ENCODE measurements at regions of chr10 and their contacts with region 1.

Region 1: DNA sequence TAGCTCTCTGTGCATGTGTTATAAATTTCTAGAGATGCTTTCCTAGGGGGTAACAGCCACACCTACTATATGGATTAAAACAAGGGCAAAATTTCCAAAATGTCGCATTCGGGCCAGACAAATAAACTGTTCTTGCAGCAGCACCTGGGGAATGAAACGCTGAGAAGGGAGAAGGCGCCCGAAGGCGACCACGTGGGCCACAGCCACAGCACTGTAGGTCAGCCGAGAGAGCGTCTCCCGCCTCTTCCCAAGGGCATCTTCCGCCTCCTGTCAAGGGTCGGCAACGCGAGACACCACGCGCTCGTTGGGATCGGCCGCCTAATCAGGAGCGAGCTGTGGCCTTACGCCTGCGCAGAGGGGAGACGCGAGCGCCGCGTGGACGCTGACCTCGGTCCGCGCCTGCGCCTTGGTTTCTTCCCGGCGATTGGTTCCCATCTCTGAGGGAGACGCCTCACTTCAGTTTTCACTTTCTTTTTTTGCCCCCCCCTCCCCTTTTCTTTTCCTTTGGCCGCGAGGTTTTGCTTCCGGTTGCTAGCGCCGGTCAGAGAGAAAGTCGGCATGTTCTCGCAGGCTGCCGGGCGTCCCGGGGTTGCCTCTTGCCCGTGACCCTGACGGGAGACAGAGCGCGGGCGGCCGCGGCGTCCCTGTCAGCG is at the start of gene TASOR2:
- DNase-seq: peak; percentile 96
- H3K4me3 Mint-ChIP-seq: peak within 1 kb of the TSS; percentile 97
- H3K27ac Mint-ChIP-seq: peak within 1 kb of the TSS; percentile 97
- H3K4me1 Mint-ChIP-seq: peaks cover 62% of the 10 kb centered on the region
- H3K27me3 Mint-ChIP-seq: no peaks in the 10 kb centered on the region
- total RNA-seq, gene TASOR2: 89.2 and 90.9 TPM in 2 replicates

Region 2: DNA sequence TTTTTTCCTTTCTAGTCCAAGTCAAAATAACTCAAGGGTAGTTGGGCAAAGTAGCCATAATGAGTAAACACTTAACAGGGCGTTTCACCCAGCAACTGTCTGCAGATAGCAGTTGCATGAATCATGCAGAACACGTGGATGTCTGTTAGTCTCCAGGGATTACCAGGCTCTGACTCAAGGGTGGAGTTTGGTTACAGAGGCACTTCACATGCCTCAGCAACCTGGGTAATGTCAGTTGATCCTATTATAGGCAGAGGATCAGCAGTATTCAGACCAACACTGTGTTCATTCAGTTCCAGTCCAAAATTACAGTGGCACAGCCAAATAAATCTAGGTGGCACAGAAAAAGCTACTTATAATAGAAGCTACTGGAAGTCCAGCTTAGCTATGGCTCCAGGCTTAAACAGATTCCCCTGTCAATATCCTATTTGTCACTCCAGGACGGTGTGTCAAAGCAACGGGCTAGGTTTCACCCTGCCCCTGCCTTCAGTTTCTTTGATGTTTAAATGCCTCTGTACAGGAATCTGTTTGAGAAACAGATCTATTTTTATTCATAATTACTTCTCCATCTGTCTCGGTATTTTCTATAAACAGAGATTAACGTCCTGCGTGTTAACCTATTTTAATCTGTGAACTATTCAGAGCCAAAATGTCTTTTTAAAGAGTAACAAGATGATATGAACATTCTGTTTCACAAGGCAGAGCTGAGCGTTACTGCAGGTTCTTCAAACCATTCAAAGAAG is 1021.1 kb before region 1 on chr10:
- intact Hi-C with region 1: no loop called
- DNase-seq: no peak
- H3K4me3 Mint-ChIP-seq: no peak overlapping the region
- H3K27ac Mint-ChIP-seq: no peak overlapping the region
- H3K4me1 Mint-ChIP-seq: no peaks in the 10 kb centered on the region
- H3K27me3 Mint-ChIP-seq: peaks cover 27% of the 10 kb centered on the region

Region 3: GRCh38 chr10:5293691-5294550 is 390.5 kb before region 1 on chr10:
- intact Hi-C with region 1: loop called (anchors 10 kb)
- DNase-seq: peak; percentile 73
- H3K4me3 Mint-ChIP-seq: peak overlapping the region; percentile 93
- H3K27ac Mint-ChIP-seq: peak overlapping the region; percentile 100
- H3K4me1 Mint-ChIP-seq: peaks cover 82% of the 10 kb centered on the region
- H3K27me3 Mint-ChIP-seq: no peaks in the 10 kb centered on the region

Region 4: DNA sequence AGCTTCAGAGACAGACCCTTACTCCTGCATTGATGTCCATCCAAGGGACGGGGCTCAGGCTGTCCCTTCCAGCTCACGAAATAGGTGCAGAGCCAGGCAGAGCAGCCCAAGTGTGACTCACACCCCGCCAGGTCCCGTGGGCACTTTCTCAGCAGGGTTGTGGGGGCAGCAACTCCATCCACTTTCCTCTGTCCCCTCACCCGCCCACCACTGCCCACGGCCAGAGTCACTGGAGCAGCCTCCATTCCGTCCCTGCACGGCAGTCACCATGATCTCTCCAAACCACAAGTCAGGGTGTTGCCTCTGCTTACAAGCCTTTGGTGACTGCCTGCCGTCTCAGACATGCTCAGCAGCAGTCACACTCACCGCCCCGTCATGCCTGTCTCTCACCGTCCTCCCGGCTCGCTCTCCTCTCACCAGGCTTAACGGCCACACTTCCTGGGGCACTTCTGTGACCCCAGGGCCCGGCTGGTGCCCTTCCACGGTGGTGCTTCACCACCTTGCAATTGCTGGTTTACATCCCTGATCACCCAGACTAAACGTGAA is 120.4 kb before region 1 on chr10:
- intact Hi-C with region 1: no loop called
- DNase-seq: peak; percentile 25
- H3K4me3 Mint-ChIP-seq: peak overlapping the region; percentile 71
- H3K27ac Mint-ChIP-seq: peak overlapping the region; percentile 85
- H3K4me1 Mint-ChIP-seq: peaks cover 19% of the 10 kb centered on the region
- H3K27me3 Mint-ChIP-seq: peaks cover 4% of the 10 kb centered on the region

Region 5: GRCh38 chr10:5629303-5630111 is 54.9 kb before region 1 on chr10:
- intact Hi-C with region 1: loop called (anchors 5 kb)
- DNase-seq: peak; percentile 76
- H3K4me3 Mint-ChIP-seq: peak overlapping the region; percentile 29
- H3K27ac Mint-ChIP-seq: peak overlapping the region; percentile 85
- H3K4me1 Mint-ChIP-seq: peaks cover 19% of the 10 kb centered on the region
- H3K27me3 Mint-ChIP-seq: peaks cover 3% of the 10 kb centered on the region

Region 6: DNA sequence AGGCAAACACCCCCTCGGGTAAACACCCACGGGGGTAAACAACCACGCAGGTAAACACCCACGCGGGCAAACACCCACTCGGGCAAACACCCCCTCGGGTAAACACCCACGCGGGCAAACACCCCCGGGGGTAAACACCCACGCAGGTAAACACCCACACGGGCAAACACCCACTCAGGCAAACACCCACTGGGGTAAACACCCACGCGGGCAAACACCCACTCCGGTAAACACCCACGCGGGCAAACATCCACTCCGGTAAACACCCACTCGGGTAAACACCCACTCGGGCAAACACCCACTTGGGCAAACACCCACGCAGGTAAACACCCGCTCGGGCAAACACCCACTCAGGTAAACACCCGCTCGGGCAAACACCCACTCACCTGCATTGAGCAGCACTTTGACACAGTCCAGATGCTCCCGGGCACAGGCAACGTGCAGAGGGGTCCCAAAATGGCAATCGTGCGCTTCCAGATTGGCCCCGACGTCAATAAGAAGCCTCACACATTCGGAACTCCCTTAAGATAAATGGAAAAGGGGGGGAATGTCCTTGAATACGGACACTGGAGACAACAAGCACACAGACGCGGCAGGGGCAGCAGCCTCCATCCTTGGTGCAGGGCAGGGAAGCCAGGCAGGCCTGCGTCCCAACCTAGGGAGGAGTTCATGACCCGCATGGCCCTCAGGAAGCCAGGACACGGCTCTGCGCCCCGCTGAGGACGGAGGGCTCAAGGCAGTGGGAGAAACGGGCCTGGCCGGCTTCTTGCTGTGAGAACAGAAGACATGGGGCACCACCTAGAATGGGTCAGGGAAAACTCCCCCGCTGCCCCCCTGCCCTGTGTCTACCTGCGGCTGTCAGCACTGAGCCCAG is 35.6 kb before region 1 on chr10:
- intact Hi-C with region 1: no loop called
- DNase-seq: no peak
- H3K4me3 Mint-ChIP-seq: no peak overlapping the region
- H3K27ac Mint-ChIP-seq: peak overlapping the region; percentile 88
- H3K4me1 Mint-ChIP-seq: peaks cover 24% of the 10 kb centered on the region
- H3K27me3 Mint-ChIP-seq: peaks cover 7% of the 10 kb centered on the region

Region 7: DNA sequence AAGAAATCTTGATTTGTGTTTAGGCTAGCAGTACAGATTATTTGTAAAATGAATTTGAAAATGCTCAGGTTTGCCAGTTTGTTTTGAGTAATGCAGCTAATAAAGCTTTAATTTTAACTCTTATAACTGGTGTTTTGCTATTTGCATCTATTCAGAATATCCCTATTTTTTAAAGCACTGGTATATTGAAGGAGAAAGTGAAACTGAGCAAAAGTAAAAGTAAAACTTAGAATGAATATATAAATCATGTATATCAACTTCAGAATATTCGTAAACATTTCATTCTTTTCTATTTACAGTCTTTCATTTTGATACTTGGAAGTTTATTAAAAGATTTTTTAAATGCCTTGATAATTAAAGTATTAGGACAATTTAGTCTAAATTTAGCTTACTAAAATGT is 26.4 kb after region 1 on chr10:
- intact Hi-C with region 1: loop called (anchors 1 kb)
- DNase-seq: no peak
- H3K4me3 Mint-ChIP-seq: peak overlapping the region; percentile 52
- H3K27ac Mint-ChIP-seq: no peak overlapping the region
- H3K4me1 Mint-ChIP-seq: peaks cover 45% of the 10 kb centered on the region
- H3K27me3 Mint-ChIP-seq: no peaks in the 10 kb centered on the region

Region 8: GRCh38 chr10:5776136-5776880 is 91.9 kb after region 1 on chr10:
- intact Hi-C with region 1: loop called (anchors 2 kb)
- DNase-seq: no peak
- H3K4me3 Mint-ChIP-seq: peak overlapping the region; percentile 58
- H3K27ac Mint-ChIP-seq: peak overlapping the region; percentile 91
- H3K4me1 Mint-ChIP-seq: peaks cover 44% of the 10 kb centered on the region
- H3K27me3 Mint-ChIP-seq: no peaks in the 10 kb centered on the region

Region 9: DNA sequence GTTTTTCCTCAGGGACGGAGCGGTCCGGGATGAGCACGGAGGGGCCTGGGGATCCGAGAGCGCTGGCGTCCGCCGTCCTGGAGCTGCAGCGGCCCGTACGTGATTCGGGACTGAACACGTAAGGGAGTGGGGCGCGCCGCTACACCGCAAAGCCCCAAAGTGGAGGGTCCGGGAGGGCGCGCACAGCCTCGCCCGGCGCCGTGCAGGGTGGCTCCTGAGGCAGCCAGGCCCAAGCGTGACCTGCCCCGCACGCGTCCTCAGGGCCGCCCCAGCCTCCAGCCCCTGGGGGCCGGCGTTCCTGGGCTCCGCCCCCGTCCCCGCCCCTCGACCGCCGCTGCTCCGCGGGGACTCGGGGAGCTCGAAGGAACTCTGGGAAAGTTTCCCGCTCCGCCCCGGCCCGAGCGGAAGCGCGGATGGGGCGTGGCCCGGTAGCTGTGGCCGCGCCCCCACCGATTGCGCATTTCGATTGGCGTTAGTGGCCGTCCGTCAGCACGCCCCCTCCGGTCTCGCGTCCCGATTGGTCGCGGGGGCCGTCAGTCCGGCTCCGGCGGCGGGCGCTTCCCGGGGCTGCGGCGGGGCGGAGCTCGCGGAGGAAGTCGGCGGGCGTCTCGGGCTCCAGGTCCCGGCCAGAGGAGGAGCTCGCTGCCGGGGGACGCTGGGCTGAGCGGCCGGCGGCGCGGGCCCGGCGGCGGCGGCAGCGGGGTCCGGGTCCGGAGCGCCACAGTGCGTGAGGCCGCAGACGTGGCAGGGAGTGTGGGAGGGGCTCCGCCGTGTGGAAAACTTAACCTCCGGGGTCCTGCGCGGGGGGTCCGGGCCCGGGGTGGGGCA is 205.4 kb after region 1 on chr10 and contains the starts of genes ANKRD16 and FBH1:
- intact Hi-C with region 1: loop called (anchors 1 kb)
- DNase-seq: peak; percentile 99
- H3K4me3 Mint-ChIP-seq: peak within 1 kb of the TSS; percentile 91
- H3K27ac Mint-ChIP-seq: peak within 1 kb of the TSS; percentile 76
- H3K4me1 Mint-ChIP-seq: peaks cover 52% of the 10 kb centered on the region
- H3K27me3 Mint-ChIP-seq: no peaks in the 10 kb centered on the region
- total RNA-seq, gene ANKRD16: 11.3 and 12.4 TPM in 2 replicates
- total RNA-seq, gene FBH1: 66.9 and 70.6 TPM in 2 replicates

Region 10: DNA sequence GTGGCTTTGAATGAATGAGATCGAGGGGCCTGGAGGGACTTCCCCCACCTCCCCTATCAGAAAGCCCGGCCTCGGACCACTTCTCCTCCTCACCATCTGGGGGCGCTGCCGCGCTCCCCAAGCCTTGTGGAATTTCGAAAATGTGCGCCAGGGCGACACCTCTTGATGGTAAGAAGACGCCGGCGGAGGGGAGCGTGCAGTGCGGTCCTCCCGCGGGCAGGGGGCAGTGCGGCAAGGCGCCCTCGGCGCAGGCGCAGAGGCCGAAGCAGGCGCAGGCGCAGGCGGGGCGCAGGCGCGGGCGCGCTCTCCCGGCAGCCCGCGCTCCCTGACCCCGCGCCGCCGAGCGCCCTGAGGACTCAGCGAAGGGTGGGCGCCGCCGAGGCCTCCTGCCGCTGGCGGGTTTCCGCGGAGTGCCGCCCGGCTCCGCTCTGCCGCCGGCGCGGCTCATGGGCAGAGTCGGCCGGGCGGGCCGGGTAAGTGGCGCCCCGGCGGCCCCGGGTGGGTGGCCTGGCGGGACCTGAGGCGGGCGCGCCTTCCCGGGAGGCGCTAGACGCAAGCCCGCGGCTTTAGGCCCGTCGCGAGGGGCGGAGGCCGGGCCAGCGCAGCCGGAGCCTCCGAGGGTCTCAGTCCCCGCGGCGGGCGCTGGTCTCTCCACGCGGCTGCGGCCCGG is 404.4 kb after region 1 on chr10 and contains the start of gene RBM17:
- intact Hi-C with region 1: loop called (anchors 10 kb)
- DNase-seq: peak; percentile 98
- H3K4me3 Mint-ChIP-seq: peak within 1 kb of the TSS; percentile 95
- H3K27ac Mint-ChIP-seq: peak within 1 kb of the TSS; percentile 88
- H3K4me1 Mint-ChIP-seq: peaks cover 63% of the 10 kb centered on the region
- H3K27me3 Mint-ChIP-seq: no peaks in the 10 kb centered on the region
- total RNA-seq, gene RBM17: 265 and 283 TPM in 2 replicates

Measured in activated T-helper 1 cell treated with anti-CD3 and anti-CD28 coated beads, Interleukin-12 subunit alpha, Interleukin-12 subunit beta, Interleukin-2, Interleukin-4 antibody, amounts not matched to agents 30 ng/mL and 10 ng/mL and 1 ng/mL, durations not matched to agents 14 hours and 24 hours and 36 hours (primary cell).